ENCODE measurements at regions of chr16 and their contacts with region 1.

Region 1: GRCh38 chr16:50373780-50374179 is 5.0 kb upstream of the BRD7 start:
- DNase-seq: no peak
- H3K4me3 ChIP-seq: no peak overlapping the region
- H3K27ac ChIP-seq: no peak overlapping the region
- H3K4me1 ChIP-seq: 0 out of 2 replicates have a peak, but pooled peaks cover 4% of the 10 kb centered on the region
- H3K27me3 ChIP-seq: no peaks in the 10 kb centered on the region
- CTCF ChIP-seq: no peak

Region 2: GRCh38 chr16:50509521-50510341 is 136.0 kb after region 1 on chr16:
- CTCF ChIA-PET with region 1: no interaction called
- POLR2A ChIA-PET with region 1: no interaction called
- intact Hi-C with region 1: loop called (anchors 1 kb)
- DNase-seq: peak in 1 of 2 experiments; percentile 14
- H3K4me3 ChIP-seq: no peak overlapping the region
- H3K27ac ChIP-seq: no peak overlapping the region
- H3K4me1 ChIP-seq: peaks cover 4% of the 10 kb centered on the region
- H3K27me3 ChIP-seq: no peaks in the 10 kb centered on the region
- CTCF ChIP-seq: peak; percentile 85

Region 3: DNA sequence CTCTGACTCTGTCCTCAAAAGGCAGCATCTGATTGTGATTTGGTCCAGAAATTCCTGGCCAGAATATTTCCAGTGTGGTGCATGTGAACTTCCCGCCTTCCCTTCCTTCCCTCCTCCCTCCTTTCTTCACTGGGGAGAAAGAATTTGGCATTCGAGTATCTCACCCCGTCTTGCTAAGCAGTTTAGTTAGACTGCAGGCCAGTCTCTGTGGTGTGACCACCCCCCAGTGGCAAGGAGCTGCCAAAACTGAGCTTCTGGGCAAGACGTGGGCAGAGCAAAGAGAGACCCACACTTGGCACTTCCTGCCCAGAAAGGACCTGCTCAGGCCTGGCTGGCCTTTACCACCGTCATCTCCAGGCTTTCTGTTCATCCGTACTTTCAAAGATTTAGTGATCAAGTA is 270.9 kb after region 1 on chr16:
- CTCF ChIA-PET with region 1: interaction called, 4 read pairs
- POLR2A ChIA-PET with region 1: no interaction called
- intact Hi-C with region 1: loop called (anchors 2 kb)
- DNase-seq: peak in 1 of 2 experiments; percentile 34
- H3K4me3 ChIP-seq: no peak overlapping the region
- H3K27ac ChIP-seq: no peak overlapping the region
- H3K4me1 ChIP-seq: no peaks in the 10 kb centered on the region
- H3K27me3 ChIP-seq: peaks cover 7% of the 10 kb centered on the region
- CTCF ChIP-seq: peak; percentile 67

Region 4: DNA sequence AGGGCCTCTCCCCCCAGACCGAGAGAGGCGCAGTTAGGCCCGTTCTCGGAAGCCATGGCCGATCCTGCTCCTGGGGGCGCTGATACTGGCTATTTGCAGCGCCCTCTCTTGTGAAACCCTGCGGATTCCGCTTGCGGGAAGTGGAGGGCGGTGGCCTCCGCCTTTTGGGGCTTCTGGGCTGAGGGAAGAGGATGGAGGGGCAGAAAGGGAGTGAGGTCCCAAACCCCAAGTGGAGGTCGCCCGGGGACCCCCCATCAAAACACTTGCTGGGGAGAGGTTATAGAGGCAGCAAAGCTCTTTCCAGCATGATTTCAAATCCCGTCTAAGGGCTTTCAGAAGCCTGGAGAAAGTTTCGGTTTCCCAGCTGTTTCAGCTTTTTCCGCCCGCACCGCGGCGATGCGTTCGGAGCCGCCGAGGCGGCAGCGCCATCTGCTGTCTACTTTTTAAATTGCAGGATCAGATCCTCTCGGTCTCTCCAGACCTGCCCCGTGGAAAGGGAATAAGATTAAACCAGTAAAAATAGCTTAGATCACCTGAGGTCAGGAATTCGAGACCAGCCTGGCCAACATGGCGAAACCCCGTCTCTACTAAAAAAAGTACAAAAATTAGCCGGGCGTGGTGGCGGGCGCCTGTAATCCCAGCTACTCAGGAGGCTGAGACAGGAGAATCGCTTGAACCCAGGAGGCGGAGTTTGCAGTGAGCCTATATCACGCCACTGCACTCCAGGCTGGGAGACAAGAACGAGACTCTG is 291.5 kb after region 1 on chr16:
- CTCF ChIA-PET with region 1: interaction called, 5 read pairs
- POLR2A ChIA-PET with region 1: no interaction called
- intact Hi-C with region 1: loop called (anchors 1 kb)
- DNase-seq: peak; percentile 51 to 79
- H3K4me3 ChIP-seq: peak overlapping the region; percentile 45; the same call in 1 of the 2 replicates
- H3K27ac ChIP-seq: no peak overlapping the region
- H3K4me1 ChIP-seq: peaks cover 14% of the 10 kb centered on the region
- H3K27me3 ChIP-seq: no peaks in the 10 kb centered on the region
- CTCF ChIP-seq: peak; percentile 93